Colonic mucosa (tissue), 4 donors: ENCODE measurements at regions of chr16 and their contacts with region 1.

Region 1: GRCh38 chr16:58537124-58537906 is 22.0 kb downstream of the SETD6 start:
- DNase-seq: no peak
- H3K4me3 ChIP-seq: no peak overlapping the region
- H3K27ac ChIP-seq: no peak overlapping the region
- H3K4me1 ChIP-seq: no peaks in the 10 kb centered on the region
- H3K27me3 ChIP-seq: no peaks in the 10 kb centered on the region
- CTCF ChIP-seq: no peak

Region 2: DNA sequence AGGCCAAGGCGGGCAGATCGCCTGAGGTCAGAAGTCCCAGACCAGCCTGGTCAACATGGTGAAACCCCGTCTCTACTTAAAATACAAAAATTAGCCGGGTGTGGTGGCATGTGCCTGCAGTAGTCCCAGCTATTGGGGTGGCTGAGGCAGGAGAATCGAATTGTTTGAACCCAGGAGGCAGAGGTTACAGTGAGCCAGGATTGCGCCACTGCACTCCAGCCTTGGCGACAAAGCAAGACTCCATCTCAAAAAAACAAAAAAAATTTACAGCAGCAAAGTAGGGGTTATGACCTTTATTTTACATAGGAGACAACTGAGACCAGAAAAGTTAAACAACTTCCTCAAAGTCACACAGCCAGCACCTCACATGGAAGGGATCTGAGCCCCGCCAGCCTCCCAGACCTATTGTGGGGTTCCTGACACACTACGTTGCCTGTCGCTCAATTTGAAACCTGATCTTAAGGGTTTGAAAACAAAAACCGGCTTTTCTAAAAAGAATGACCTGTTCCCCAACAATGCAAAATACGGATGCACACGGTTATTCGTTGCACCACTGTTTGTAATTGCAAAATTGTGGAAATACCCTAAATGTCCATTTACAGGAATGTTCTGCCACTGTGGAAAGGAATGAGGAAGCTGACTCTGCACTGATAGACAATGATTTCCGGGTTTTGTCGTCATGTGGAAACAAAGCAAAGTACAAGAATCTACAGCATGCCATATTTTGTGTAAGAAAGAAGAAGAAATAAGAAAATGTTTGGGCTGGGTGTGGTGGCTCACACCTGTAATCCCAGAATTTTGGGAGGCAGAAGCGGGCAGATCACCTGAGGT is 643.5 kb before region 1 on chr16:
- intact Hi-C with region 1: no loop called
- DNase-seq: peak; percentile 44
- H3K4me3 ChIP-seq: no peak overlapping the region
- H3K27ac ChIP-seq: peak overlapping the region; percentile 57
- H3K4me1 ChIP-seq: no peaks in the 10 kb centered on the region
- H3K27me3 ChIP-seq: no peaks in the 10 kb centered on the region
- CTCF ChIP-seq: no peak

Region 3: DNA sequence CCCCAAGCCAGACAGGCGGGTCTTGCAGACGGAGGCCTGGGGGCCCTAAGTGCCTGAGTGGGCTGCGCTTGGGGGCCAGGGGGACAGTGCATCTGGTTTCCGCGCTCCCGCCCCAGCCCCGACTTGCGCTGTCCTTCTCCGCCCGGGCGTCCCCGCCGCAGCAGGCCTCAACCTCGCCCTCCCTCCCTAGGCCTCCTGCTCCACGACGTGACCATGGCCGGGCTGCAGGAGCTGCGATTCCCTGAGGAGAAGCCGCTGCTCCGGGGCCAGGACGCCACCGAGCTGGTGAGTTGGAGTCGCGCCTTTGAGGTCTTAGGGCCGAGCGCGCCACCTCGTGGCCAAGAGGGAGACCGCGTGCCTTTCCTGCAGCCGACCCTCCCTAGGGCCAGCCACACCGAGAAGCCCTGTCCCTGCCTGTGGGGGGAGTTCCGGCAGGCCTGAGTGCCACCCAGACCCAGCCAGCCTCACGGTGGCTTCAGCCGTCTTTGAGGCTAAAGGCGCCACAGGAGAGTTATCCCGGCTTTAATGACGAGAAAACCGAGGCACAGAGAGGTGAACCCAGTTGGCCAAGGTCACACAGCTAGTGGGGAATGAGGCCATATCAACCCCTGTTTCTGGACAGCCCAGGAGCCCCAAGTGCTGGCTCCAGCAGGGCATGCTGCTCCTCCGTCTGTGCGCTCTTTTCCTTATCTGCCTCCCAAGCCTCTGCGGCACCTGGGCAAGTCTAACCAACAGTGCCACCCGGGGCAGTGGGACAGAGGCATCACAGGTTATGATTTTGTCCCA is 49.6 kb before region 1 on chr16:
- intact Hi-C with region 1: no loop called
- DNase-seq: peak; percentile 76
- H3K4me3 ChIP-seq: no peak overlapping the region
- H3K27ac ChIP-seq: no peak overlapping the region
- H3K4me1 ChIP-seq: no peaks in the 10 kb centered on the region
- H3K27me3 ChIP-seq: no peaks in the 10 kb centered on the region
- CTCF ChIP-seq: peak; percentile 81

Region 4: GRCh38 chr16:58578642-58579041 is 41.3 kb after region 1 on chr16:
- intact Hi-C with region 1: loop called (anchors 5 kb)
- DNase-seq: no peak
- H3K4me3 ChIP-seq: no peak overlapping the region
- H3K27ac ChIP-seq: no peak overlapping the region
- H3K4me1 ChIP-seq: no peaks in the 10 kb centered on the region
- H3K27me3 ChIP-seq: no peaks in the 10 kb centered on the region
- CTCF ChIP-seq: no peak